ENCODE measurements at regions of chr18 and their contacts with region 1.

Region 1: DNA sequence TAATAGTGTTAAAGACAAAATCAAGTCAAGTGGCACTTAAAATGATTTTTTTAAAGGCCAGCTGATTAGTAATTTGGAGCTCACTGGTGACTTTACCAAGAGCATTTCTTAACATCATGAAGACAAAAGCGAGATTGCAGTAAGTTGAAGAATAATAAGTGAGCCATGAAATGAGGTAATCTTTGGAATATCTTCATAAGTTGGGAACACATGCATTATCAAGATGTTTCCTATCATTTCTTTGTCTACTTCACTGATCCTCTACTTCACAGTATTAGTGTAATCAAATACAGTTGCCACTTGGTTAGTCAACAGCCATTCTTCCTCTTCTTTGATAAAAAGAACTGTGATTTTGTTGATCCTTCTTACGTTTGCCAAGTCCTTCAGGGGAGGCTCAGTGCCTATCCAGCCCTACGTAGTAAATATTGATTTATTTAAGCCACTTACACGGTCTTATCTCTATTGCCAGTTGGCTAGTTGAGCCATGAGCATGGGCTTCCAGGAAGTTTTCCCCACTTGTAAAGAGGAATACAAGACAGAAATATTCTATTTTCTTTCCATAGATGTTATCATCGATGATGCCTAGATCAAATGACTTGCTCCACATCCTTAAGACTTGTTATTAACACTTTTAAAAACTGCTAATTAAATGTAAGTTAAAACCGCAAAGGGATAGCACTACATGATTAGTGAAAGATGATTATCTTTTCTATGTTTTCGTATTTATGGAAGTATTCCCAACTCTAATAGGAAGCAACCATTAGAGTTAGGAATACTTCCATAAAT is 46.1 kb downstream of the YES1 start:
- DNase-seq: no peak
- ATAC-seq: no peak
- H3K4me3 ChIP-seq: no peak overlapping the region
- H3K27ac ChIP-seq: no peak overlapping the region
- H3K4me1 ChIP-seq: peaks cover 0 to 36% (median 7%) of the 10 kb centered on the region in 9 donors
- H3K27me3 ChIP-seq: no peaks in the 10 kb centered on the region
- CTCF ChIP-seq: no peak

Region 2: GRCh38 chr18:741931-742512 is 23.9 kb before region 1 on chr18:
- intact Hi-C with region 1: no loop called
- DNase-seq: no peak
- ATAC-seq: peak; percentile 55 to 87 (median 76)
- H3K4me3 ChIP-seq: no peak overlapping the region
- H3K27ac ChIP-seq: peak overlapping the region in 2 of 10 donors; percentile 21 to 42
- H3K4me1 ChIP-seq: peaks cover 0 to 10% (median 0%) of the 10 kb centered on the region in 9 donors
- H3K27me3 ChIP-seq: no peaks in the 10 kb centered on the region
- CTCF ChIP-seq: peak; percentile 65 to 89 (median 80)

Region 3: DNA sequence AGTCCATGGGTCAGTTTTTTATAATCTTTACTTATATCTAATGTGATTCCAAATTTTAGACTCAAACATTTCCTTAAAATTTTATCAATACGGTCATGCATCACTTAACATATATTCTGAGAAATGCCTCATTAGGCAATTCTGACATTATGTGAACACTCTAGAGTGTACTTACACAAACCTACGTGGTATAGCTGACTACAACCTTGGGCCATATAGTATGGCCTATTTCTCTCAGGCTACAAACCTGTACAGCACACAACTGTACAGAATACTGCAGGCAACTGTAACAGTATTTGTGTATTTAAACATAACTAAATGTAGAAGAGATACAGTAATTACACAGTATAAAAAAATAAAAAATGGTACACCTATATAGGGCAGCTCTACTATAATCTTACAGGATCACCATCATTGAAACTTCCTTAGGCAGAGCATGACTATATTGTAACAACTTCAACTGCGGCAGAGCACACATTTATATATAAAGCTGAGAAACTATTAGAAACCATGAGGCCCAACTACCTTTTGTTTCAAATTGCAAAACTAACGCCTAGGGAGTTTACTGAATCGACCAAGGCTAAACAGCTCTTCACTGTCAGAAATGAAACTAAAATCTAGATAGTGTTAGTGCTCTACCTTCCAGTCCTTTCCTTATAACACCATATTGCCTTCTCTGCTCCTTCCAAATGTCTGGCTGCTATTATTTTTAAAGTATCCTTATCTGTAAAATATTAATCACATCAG is 39.2 kb after region 1 on chr18:
- intact Hi-C with region 1: loop called in 2 of 10 experiments (anchors 5 kb)
- DNase-seq: no peak
- ATAC-seq: no peak
- H3K4me3 ChIP-seq: peak overlapping the region in 2 of 10 donors; percentile 5 to 6
- H3K27ac ChIP-seq: peak overlapping the region in 2 of 10 donors; percentile 27 to 37
- H3K4me1 ChIP-seq: peaks cover 0 to 72% (median 53%) of the 10 kb centered on the region in 9 donors
- H3K27me3 ChIP-seq: peaks cover 0 to 83% (median 0%) of the 10 kb centered on the region in 7 donors
- CTCF ChIP-seq: no peak

Region 4: GRCh38 chr18:2672410-2672809 is 1906.5 kb after region 1 on chr18:
- intact Hi-C with region 1: loop called in 1 of 10 experiments (anchors 5 kb)
- DNase-seq: no peak
- ATAC-seq: no peak
- H3K4me3 ChIP-seq: no peak overlapping the region
- H3K27ac ChIP-seq: no peak overlapping the region
- H3K4me1 ChIP-seq: peaks cover 0 to 8% (median 0%) of the 10 kb centered on the region in 9 donors
- H3K27me3 ChIP-seq: no peaks in the 10 kb centered on the region
- CTCF ChIP-seq: no peak

Measured in heart right ventricle (tissue), 16 donors.